Activated CD8-positive, alpha-beta T cell treated with anti-CD3 and anti-CD28 coated beads for 36 hours (primary cell): ENCODE measurements at regions of chr11 and their contacts with region 1.

Region 1: DNA sequence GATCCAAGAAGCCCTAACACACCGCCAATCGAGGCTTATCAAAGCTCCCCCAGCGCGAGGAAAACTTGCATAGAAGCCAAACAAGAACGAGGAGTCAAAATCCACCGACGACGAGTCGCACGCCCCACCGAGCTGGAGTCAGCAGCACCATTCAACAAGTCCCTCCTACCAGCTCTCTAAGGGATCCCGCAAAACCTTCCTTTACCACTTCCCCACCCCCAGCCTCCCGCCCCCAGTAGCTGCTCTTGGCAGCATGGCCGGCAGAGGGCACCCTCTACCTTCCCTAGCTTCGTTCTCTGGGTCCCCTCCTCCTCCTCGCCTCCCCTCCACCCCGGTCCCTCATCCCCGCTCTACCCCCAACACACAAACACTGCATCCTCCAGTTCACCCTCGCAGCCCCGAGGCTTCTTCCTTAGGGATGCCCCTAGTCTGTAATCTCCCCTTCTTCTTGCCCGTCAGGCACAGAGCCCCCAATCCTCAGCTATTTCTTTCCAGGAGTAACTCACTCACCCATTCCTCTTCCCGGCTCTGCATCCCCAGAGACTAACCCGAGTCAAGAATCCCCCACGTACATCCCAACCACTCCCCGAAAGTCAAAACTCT is 1.3 kb downstream of the BDNF start:
- DNase-seq: peak; percentile 85
- ATAC-seq: peak; percentile 92
- H3K4me3 Mint-ChIP-seq: peak overlapping the region; percentile 31
- H3K27ac Mint-ChIP-seq: no peak overlapping the region
- H3K4me1 Mint-ChIP-seq: peaks cover 22% of the 10 kb centered on the region
- H3K27me3 Mint-ChIP-seq: peaks cover 66% of the 10 kb centered on the region
- CTCF ChIP-seq: peak; percentile 74

Region 2: GRCh38 chr11:27717377-27717776 is 18.4 kb after region 1 on chr11:
- CTCF ChIA-PET with region 1: interaction called, 28 read pairs
- POLR2A ChIA-PET with region 1: interaction called, 3 read pairs
- intact Hi-C with region 1: no loop called
- DNase-seq: no peak
- ATAC-seq: no peak
- H3K4me3 Mint-ChIP-seq: no peak overlapping the region
- H3K27ac Mint-ChIP-seq: no peak overlapping the region
- H3K4me1 Mint-ChIP-seq: peaks cover 12% of the 10 kb centered on the region
- H3K27me3 Mint-ChIP-seq: peaks cover 52% of the 10 kb centered on the region
- CTCF ChIP-seq: no peak

Region 3: DNA sequence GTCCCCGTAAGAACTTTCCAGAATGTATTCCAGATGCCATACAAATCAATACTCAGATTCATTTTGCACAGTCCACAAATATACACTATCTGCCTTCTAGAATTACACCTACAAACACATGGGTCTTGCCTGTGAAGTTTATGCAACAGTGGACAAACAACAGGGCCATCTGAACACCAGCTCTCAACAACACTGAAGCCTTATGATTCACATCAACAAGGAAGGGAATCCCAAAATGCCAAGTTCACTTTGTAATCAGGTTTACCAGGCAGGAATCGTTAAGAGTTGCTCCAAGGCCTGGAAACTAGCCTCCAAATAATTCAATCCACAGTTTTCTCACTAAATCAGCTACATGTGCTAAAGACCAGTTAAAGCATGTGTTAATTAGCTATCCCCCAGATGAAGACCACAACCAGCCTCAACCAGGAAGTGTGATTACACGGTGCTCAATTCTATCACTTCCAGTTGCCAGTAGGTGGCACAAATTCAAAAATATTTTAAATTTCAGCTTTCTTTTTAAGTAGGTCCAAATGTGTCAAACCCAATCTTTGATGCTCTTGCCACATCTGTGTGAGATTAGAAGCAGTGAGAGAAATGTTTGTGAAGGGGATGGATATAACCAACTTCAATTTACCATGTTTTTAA is 140.4 kb after region 1 on chr11:
- CTCF ChIA-PET with region 1: interaction called, 10 read pairs
- POLR2A ChIA-PET with region 1: no interaction called
- intact Hi-C with region 1: no loop called
- DNase-seq: no peak
- ATAC-seq: no peak
- H3K4me3 Mint-ChIP-seq: no peak overlapping the region
- H3K27ac Mint-ChIP-seq: no peak overlapping the region
- H3K4me1 Mint-ChIP-seq: no peaks in the 10 kb centered on the region
- H3K27me3 Mint-ChIP-seq: peaks cover 5% of the 10 kb centered on the region
- CTCF ChIP-seq: no peak

Region 4: DNA sequence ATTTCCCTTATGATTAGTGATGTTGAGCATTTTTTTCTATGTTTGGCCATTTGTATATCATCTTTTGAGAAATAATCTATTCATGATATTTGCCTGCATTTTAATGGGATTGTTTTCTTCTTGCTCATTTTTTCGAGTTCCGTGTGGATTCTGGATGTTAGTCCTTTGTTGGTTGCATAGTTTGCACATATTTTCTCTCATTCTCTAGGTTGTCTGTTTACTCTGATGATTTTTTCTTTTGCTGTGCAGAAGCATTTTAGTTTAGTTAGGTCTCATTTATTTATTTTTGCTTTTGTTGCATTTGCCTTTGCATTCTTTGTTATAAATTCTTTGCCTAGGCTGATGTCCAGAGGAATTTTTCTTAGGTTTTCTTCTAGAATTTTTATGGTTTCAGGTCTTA is 496.5 kb after region 1 on chr11:
- CTCF ChIA-PET with region 1: no interaction called
- POLR2A ChIA-PET with region 1: no interaction called
- intact Hi-C with region 1: no loop called
- DNase-seq: no peak
- ATAC-seq: no peak
- H3K4me3 Mint-ChIP-seq: no peak overlapping the region
- H3K27ac Mint-ChIP-seq: no peak overlapping the region
- H3K4me1 Mint-ChIP-seq: no peaks in the 10 kb centered on the region
- H3K27me3 Mint-ChIP-seq: no peaks in the 10 kb centered on the region
- CTCF ChIP-seq: no peak

Region 5: GRCh38 chr11:28529540-28530410 is 830.8 kb after region 1 on chr11:
- CTCF ChIA-PET with region 1: interaction called, 49 read pairs
- POLR2A ChIA-PET with region 1: no interaction called
- intact Hi-C with region 1: no loop called
- DNase-seq: no peak
- ATAC-seq: no peak
- H3K4me3 Mint-ChIP-seq: no peak overlapping the region
- H3K27ac Mint-ChIP-seq: no peak overlapping the region
- H3K4me1 Mint-ChIP-seq: no peaks in the 10 kb centered on the region
- H3K27me3 Mint-ChIP-seq: no peaks in the 10 kb centered on the region
- CTCF ChIP-seq: peak; percentile 29

Region 6: DNA sequence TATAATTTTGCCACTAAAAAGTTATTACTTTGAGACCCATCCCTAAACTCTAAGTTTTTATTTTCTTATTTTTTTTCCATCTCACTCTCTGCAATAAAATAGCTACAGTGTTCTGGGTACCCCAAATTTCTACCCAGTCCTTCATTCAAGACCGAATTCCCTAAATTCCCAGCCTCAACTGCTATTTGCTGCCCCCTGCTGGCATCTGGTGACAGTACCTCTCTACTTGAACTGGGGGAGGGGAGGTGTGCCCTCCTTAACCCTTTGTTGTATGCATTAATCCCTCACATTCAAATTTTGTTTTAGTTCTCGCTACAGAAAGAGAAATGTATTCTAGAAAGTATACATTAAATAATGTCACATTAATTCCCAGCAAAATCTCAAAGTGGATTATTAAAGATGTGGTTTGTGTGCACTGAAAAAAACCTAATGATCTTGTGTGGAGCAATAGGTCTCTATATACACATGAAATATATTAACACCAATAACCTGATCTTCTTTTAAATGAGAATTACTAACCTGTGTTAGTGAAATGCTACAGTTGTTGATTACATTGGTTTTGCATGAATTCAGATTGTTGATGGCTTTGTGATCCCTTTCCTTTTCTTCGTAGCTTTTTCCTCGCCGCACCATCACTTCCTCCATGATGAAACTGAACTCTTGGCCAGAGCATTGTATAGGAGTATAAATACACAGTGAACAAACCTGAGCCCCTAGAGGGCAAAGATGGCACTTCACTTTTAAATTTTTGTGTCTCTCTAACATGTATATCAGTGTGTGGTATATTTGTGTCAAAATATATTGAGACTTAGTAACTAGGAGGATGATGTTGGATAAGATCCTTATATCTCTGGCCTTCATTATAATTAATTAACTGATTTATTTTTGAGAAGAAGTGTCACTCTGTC is 999.2 kb after region 1 on chr11:
- CTCF ChIA-PET with region 1: interaction called, 3 read pairs
- POLR2A ChIA-PET with region 1: no interaction called
- intact Hi-C with region 1: loop called (anchors 10 kb)
- DNase-seq: peak; percentile 42
- ATAC-seq: no peak
- H3K4me3 Mint-ChIP-seq: no peak overlapping the region
- H3K27ac Mint-ChIP-seq: no peak overlapping the region
- H3K4me1 Mint-ChIP-seq: no peaks in the 10 kb centered on the region
- H3K27me3 Mint-ChIP-seq: no peaks in the 10 kb centered on the region
- CTCF ChIP-seq: peak; percentile 78